Cardiac septum (tissue), 1 donor: ENCODE measurements at regions of chr4 and their contacts with region 1.

Region 1: DNA sequence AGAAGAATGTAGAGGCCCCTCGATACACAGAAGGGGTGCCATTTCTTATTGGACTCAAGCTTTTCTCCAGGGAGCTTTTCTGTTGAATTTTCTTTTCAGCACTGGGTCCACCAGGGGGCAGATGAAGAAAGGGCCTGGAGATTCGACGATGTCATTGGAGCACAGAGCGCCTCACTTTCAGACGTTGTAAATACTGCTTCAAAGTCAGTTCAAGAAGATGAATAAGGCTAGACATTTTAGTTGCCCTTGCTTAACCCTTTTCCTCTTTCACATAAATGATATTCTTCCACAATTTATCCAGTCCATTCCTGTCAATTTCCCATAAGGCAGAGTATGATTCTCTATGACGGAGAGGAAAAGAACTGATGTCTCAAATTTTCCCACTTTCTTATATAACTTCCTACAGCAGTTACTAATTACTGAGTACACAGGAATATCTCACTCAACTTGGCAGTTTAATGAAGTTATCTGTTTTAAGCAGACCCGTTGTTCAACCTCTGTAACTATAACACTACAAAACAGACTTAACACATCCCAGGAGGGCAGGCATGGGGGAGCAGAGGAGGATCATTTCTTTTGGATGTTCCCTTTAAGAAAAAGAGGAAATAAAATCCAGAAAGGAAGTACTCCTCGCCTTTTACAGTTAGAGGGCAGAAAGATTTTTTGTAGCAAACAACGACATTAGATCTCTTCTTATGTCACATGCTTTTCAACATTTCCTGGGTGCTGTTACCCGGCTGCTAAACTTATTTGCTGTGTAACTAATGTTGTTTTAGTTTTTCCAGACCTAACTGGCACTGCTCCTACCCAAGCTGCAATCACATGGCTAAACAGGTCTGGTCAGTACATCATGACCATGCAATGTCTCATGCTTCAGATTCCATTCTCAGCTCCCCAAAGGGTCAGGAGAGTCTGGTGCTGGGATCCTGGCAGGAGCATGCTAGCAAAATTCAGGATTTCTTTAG is 12.2 kb upstream of the CENPU start:
- DNase-seq: no peak

Region 2: GRCh38 chr4:184825896-184826690 is 80.0 kb after region 1 on chr4 and contains the start of gene ACSL1:
- intact Hi-C with region 1: loop called (anchors 5 kb)
- DNase-seq: peak; percentile 96
- total RNA-seq, gene ACSL1: 98.6 TPM

Region 3: DNA sequence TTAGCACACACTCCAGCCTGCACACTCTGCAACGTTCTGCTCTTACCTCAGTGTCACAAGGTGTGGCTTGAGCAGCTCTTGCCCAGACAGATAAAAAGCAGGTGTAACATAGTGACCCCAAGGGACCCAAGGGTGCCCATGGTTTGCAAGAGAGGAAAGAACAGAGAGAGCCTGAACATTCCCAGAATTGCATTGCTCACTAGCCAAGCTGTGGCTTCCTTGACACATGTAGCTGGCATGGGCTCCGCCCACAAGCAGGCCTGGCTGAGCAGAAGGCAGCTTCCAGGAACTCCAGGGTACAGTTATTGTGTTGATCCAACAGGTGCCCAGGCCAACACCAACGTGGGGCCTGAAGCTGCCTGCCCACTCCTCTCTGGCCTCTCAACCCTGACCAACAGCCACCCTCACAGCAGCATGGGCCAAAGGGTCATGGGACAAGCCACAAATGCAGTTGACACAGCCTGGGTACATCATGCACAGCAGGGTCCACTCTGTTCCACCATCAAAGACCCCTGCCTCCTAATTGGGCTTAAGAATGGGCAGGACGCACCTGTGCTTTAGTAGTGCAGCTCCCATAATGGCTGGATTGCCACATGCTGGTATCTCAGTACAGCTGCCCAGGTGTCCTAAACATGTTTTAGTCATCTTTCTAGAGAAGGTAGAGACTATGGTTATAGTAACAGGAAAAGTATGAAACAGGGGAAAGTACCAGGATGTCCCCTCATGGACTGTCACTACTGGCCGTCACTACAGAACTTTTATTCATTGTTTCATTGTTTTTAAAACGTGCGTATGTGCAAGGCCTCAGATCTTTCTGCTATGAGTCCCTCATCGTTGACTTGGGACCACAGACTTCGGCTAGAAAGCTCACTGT is 153.4 kb after region 1 on chr4:
- intact Hi-C with region 1: loop called (anchors 10 kb)
- DNase-seq: peak; percentile 81

Region 4: DNA sequence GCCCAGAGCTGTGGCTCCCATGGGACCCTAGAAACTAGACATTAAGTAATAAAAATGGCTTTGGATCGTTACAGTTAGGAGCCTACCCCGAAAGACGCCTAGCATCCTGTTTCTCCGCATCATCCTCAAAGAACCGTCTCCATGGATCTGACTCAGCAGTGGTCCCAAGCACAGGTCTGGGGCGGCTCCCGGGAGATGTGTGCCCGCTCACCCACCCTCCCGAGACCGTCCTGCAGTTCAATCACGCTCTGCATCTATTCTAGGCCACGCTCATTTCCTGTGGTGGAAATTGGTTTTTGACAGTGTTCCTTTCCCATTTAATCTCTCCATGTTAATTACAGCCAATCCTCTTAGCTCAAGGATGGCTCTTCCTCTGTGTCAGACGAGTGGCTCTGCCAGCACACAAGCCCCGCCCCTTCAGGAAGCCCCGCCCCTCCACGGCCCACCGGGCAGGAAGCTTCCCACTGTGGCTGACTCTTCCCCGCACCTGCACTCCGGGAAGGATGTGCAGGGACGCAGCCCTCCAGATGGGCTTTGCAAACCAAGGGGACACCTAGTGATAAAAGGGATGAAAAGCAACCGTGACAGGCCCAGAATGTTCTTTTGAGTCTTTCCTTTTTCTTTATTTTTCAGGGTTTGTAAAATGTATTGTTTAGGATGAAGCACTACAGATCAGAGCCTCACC is 237.7 kb after region 1 on chr4:
- intact Hi-C with region 1: loop called (anchors 2 kb)
- DNase-seq: no peak

Region 5: GRCh38 chr4:185096032-185096653 is 350.0 kb after region 1 on chr4:
- intact Hi-C with region 1: loop called (anchors 10 kb)
- DNase-seq: no peak

Region 6: DNA sequence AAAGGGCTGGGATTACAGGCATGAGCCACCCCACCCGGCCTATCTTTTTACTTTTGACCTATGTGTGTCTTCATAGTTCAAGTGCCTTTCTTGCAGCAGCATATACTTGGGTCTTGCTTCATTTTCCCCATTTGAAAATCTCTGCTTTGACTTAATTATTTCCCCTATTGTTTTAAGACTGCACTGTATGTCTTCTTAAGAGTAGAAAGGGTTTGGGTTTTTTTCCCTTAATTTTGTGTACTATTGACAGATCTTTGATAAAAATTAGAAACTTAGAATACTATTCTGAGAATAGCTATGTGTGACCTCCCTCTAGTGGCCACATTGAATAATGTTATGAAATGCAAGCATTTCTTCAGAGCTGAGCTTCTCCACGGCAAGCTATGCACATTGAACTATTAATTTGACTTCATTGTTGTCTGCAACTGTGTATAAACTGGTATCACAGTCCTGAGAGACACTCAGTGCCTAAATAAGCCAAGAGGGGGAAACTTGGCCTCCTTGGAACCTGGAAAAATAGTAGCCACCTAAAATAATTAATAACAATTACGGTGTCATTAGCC is 388.3 kb after region 1 on chr4:
- intact Hi-C with region 1: loop called (anchors 10 kb)
- DNase-seq: no peak